Endothelial cell of umbilical vein (primary cell): ENCODE measurements at regions of chr7 and their contacts with region 1.

Region 1: DNA sequence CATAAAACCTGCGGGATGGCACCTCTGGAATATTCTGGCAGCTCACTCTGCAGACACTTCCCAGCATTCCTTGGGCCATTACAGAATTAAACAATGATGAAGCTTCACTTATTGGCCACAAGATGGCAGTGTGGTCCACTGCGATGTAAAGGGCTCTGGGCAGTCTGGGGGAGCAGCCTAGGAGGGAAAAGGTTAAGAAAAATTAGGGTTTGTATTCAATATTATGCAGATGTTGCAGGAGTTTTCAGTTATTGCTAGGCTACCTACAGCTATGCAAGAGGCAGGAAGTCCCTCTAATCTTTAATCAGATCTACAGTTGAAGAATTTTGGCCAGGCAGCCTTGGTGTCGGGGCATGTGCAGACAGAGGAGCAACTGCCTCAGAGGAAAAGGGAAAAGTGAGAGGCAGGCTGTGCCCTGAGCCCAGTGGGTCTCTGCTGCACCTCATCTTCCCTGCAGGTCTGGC is 233.2 kb upstream of the PRSS1 start:
- DNase-seq: peak; percentile 65
- H3K4me3 ChIP-seq: no peak overlapping the region
- H3K27ac ChIP-seq: no peak overlapping the region
- H3K4me1 ChIP-seq: no peaks in the 10 kb centered on the region
- H3K27me3 ChIP-seq: peaks cover 9 to 13% of the 10 kb centered on the region in 2 experiments
- CTCF ChIP-seq: peak; percentile 75 to 79
- POLR2A ChIP-seq: no peak

Region 2: GRCh38 chr7:142313528-142313927 is 202.5 kb before region 1 on chr7:
- CTCF ChIA-PET with region 1: no interaction called
- POLR2A ChIA-PET with region 1: no interaction called
- dilution Hi-C with region 1: no loop called
- intact Hi-C with region 1: no loop called
- DNase-seq: no peak
- H3K4me3 ChIP-seq: no peak overlapping the region
- H3K27ac ChIP-seq: no peak overlapping the region
- H3K4me1 ChIP-seq: no peaks in the 10 kb centered on the region
- H3K27me3 ChIP-seq: no peaks in the 10 kb centered on the region
- CTCF ChIP-seq: no peak
- POLR2A ChIP-seq: no peak

Region 3: DNA sequence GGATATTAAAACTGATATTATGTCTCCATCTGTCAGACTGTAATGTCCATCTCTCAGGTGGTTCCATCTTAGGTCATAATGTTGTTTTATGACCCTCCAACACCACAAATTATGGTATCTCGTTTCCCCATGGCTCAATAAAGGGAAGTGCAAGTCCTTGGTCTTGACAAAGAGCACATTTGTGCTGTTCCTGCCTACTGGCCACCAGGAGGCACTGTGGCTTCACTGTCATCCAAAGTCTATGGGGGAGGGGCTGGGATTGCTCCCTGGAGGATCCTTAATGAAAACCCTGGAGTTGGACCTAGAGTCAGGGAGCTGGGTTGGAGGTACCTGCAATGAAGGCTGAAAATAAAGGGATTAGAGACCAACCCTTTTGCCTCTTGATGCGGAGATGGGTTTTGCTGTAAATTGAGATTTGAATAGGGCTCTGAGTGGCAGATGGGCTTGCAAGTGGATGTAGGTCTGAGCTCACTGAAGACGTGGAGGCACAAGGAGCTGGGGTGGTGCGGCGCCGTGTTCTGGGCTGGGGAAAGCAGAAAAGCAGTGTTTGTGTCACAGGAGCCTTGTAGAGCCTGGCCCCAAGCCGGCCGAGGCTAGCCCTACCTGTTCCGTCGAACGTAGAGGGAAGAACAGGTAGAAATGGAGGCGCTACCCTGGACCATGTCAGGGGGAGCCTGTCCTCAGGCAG is 77.7 kb before region 1 on chr7:
- CTCF ChIA-PET with region 1: interaction called, 5 read pairs
- POLR2A ChIA-PET with region 1: no interaction called
- dilution Hi-C with region 1: no loop called
- intact Hi-C with region 1: loop called (anchors 1 kb)
- DNase-seq: peak; percentile 38
- H3K4me3 ChIP-seq: no peak overlapping the region
- H3K27ac ChIP-seq: no peak overlapping the region
- H3K4me1 ChIP-seq: peaks cover 27% of the 10 kb centered on the region
- H3K27me3 ChIP-seq: no peaks in the 10 kb centered on the region
- CTCF ChIP-seq: peak; percentile 81 to 98
- POLR2A ChIP-seq: no peak

Region 4: DNA sequence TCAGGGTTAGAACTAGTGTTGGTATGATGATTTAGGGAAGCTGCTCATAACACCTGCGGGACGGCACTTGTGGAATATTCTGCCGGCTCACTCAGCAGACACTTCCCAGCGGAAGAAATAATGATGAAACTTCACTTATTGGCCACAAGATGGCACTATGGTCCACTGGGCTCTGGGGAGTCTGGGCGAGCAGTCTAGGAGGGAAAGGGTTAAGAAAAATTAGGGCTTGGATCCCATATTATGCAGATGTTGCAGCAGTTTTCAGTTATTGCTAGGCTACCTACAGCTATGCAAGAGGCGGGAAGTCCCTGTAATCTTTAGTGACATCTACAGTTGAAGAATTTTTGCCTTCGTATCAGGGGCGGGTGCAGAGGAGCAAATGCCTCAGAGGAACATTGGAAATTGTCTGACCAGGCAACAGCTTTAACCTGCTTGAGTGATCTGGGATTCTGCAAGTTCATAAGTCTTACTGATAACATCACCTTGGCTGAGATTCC is 19.5 kb before region 1 on chr7:
- CTCF ChIA-PET with region 1: interaction called, 18 read pairs
- POLR2A ChIA-PET with region 1: no interaction called
- dilution Hi-C with region 1: no loop called
- intact Hi-C with region 1: loop called (anchors 1 kb)
- DNase-seq: peak; percentile 41
- H3K4me3 ChIP-seq: no peak overlapping the region
- H3K27ac ChIP-seq: no peak overlapping the region
- H3K4me1 ChIP-seq: no peaks in the 10 kb centered on the region
- H3K27me3 ChIP-seq: peaks cover 14 to 27% of the 10 kb centered on the region in 2 experiments
- CTCF ChIP-seq: peak; percentile 65 to 71
- POLR2A ChIP-seq: no peak

Region 5: GRCh38 chr7:142771353-142771723 is 255.3 kb after region 1 on chr7:
- CTCF ChIA-PET with region 1: no interaction called
- POLR2A ChIA-PET with region 1: no interaction called
- dilution Hi-C with region 1: no loop called
- intact Hi-C with region 1: no loop called
- DNase-seq: no peak
- H3K4me3 ChIP-seq: no peak overlapping the region
- H3K27ac ChIP-seq: no peak overlapping the region
- H3K4me1 ChIP-seq: peaks cover 8% of the 10 kb centered on the region
- H3K27me3 ChIP-seq: peaks cover 11 to 31% of the 10 kb centered on the region in 2 experiments
- CTCF ChIP-seq: no peak
- POLR2A ChIP-seq: no peak